ENCODE measurements at regions of chr10 and their contacts with region 1.

Region 1: DNA sequence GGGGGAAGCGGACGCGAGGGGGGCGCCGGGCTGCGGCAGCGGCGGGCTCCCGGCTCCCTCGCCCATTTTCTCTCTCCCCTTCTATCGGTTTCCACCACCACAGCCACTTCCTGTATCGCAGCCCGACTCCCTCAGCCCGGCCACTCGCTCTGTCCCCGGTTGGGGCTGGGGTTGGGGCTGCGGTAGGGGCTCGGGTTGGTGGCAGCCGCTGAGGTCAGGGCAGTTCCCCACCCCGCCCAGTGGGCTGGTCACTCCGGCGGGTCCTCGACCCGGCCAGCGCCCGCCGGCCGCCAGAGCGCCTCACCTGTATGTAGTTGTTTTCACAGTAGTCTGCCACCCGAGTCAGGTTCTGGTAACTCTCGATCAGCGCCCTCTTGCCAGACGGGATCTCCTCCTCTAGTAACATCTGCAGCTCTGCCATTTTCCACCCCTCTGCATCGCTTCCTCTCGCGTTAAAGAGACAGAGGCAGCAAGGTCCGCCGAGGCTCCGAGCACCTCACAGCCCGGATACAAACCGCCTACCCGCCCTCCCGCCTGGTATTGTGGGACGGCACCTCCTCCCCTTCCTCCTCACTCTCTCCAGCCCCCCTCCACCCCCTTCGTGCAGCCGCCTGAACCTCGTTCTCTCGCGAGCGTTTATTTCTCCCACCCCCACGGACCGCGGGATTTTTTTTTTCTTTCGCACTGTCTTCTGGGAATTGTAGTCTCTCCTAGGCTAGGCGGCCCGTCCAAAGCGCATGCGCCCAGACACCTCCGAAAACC is at the start of gene ABI1:
- DNase-seq: peak; percentile 99
- H3K4me3 ChIP-seq: peak within 1 kb of the TSS; percentile 99
- H3K27ac ChIP-seq: peak within 1 kb of the TSS; percentile 95
- H3K4me1 ChIP-seq: peaks cover 29% of the 10 kb centered on the region
- CTCF ChIP-seq: 0 out of 2 replicates have a peak, but pooled peaks have one; percentile 23
- total RNA-seq, gene ABI1: 57.4 and 62.4 TPM in 2 replicates

Region 2: GRCh38 chr10:26755443-26755903 is 105.2 kb before region 1 on chr10:
- CTCF ChIA-PET with region 1: no interaction called
- POLR2A ChIA-PET with region 1: interaction called, 3 read pairs
- intact Hi-C with region 1: loop called (anchors 5 kb)
- DNase-seq: peak; percentile 49
- H3K4me3 ChIP-seq: peak overlapping the region; percentile 18
- H3K27ac ChIP-seq: peak overlapping the region; percentile 45
- H3K4me1 ChIP-seq: peaks cover 25% of the 10 kb centered on the region
- CTCF ChIP-seq: no peak

Region 3: GRCh38 chr10:26805567-26806245 is 54.9 kb before region 1 on chr10:
- CTCF ChIA-PET with region 1: no interaction called
- POLR2A ChIA-PET with region 1: interaction called, 12 read pairs
- intact Hi-C with region 1: no loop called
- DNase-seq: no peak
- H3K4me3 ChIP-seq: peak overlapping the region; percentile 40
- H3K27ac ChIP-seq: peak overlapping the region; percentile 100
- H3K4me1 ChIP-seq: peaks cover 72% of the 10 kb centered on the region
- CTCF ChIP-seq: no peak

Region 4: DNA sequence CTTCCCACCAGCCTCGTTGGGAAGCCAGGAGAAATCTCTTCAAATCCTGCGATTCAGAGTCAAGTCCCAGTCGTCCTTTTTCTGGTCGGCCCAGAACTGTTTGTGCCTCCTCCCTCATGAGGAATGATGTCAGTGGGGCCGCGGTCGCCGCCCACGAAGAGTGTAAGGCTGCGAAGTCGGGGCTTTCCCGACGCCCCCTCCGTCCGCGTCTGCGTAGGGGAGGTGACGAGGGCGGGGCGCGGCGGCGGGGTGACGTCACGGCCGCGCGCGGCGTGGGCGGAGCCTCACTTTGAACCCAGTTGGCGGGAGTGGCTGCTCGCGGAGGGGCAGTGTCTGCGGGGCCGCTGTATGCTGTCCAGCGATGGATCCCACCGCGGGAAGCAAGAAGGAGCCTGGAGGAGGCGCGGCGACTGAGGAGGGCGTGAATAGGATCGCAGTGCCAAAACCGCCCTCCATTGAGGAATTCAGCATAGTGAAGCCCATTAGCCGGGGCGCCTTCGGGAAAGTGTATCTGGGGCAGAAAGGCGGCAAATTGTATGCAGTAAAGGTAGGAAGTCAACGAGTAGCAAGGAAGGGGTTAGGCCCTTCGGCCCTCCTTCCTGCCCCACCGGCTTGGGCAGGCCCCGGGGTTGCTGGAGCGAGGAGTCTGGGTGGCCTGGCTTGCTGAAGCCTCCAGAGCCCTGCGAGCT is 294.6 kb after region 1 on chr10 and contains the start of gene MASTL:
- CTCF ChIA-PET with region 1: no interaction called
- POLR2A ChIA-PET with region 1: no interaction called
- intact Hi-C with region 1: loop called (anchors 10 kb)
- DNase-seq: peak; percentile 94
- H3K4me3 ChIP-seq: peak within 1 kb of the TSS; percentile 96
- H3K27ac ChIP-seq: peak within 1 kb of the TSS; percentile 96
- H3K4me1 ChIP-seq: peaks cover 34% of the 10 kb centered on the region
- CTCF ChIP-seq: no peak
- total RNA-seq, gene MASTL: 42.2 and 44.0 TPM in 2 replicates